CD8-positive, alpha-beta T cell (primary cell): ENCODE measurements at regions of chr2 and their contacts with region 1.

Region 1: DNA sequence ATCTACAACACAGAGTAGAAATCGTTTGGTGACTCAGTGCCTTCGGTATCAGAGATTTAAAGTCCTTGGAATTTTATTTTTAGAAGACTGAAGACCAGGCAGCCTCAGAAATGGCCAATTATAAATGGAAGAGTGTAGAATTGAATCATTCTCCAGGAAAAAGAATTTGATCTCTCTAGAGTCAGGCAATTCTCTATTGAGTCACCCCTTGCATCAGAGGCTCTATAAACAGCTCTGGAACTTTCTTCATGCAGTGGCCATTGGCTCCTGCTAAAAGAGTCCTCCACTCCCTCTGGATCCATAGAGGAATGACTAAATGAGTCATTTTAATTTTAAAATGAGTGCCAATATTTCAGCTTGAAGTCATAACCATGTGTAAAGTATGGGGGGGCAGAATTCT is 816.2 kb downstream of the TDRD15 start:
- DNase-seq: no peak
- ATAC-seq: no peak
- H3K4me3 ChIP-seq: no peak overlapping the region
- H3K4me3 Mint-ChIP-seq: no peak overlapping the region
- H3K27ac ChIP-seq: no peak overlapping the region
- H3K27ac Mint-ChIP-seq: no peak overlapping the region
- H3K4me1 ChIP-seq: no peaks in the 10 kb centered on the region
- H3K4me1 Mint-ChIP-seq: no peaks in the 10 kb centered on the region
- H3K27me3 ChIP-seq: no peaks in the 10 kb centered on the region
- H3K27me3 Mint-ChIP-seq: no peaks in the 10 kb centered on the region
- CTCF ChIP-seq: no peak

Region 2: DNA sequence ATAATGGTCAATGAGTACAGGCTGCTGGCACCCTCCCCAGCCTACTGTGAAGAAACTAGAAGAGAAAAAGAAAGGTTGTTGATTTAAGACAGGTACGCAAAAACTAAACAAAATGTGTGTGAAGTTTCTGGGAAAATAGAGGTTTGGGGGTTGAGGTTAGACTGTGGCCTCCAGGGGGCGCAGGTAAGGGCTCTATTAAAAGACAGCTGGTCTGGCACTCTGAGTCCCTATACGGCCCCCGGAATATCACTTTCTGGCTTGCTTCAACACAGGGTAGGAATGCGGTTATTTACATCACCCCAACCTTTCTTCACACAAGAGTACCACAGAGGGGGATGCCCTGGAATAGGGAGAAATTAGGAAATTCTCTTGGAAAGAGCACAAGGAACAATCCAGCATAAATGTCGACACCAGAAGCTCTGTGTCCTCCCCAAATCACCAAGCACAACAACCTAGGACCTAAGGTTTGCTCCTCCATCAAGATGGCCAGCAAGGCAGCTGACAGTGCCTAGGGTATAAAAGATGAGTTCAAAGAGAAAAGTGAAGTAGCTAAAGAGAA is 964.2 kb after region 1 on chr2:
- CTCF ChIA-PET with region 1: no interaction called
- POLR2A ChIA-PET with region 1: no interaction called
- intact Hi-C with region 1: loop called in 1 of 2 experiments (anchors 10 kb)
- DNase-seq: no peak
- ATAC-seq: no peak
- H3K4me3 ChIP-seq: no peak overlapping the region
- H3K4me3 Mint-ChIP-seq: no peak overlapping the region
- H3K27ac ChIP-seq: no peak overlapping the region
- H3K27ac Mint-ChIP-seq: no peak overlapping the region
- H3K4me1 ChIP-seq: no peaks in the 10 kb centered on the region
- H3K4me1 Mint-ChIP-seq: no peaks in the 10 kb centered on the region
- H3K27me3 ChIP-seq: no peaks in the 10 kb centered on the region
- H3K27me3 Mint-ChIP-seq: peaks cover 2% of the 10 kb centered on the region
- CTCF ChIP-seq: no peak